ENCODE measurements at regions of chr3 and their contacts with region 1.

Region 1: GRCh38 chr3:116841003-116841735 is 131.6 kb downstream of the TUSC7 start:
- DNase-seq: no peak
- H3K4me3 ChIP-seq: no peak overlapping the region
- H3K27ac ChIP-seq: no peak overlapping the region; a peak in 1 of 4 replicates
- H3K4me1 ChIP-seq: peaks cover 0 to 2% of the 10 kb centered on the region in 2 experiments; a peak in 1 of 4 replicates
- H3K27me3 ChIP-seq: no peaks in the 10 kb centered on the region
- CTCF ChIP-seq: no peak
- EP300 ChIP-seq: no peak
- RAD21 ChIP-seq: no peak

Region 2: GRCh38 chr3:116863822-116864589 is 22.8 kb after region 1 on chr3:
- CTCF ChIA-PET with region 1: interaction called, 10 read pairs
- POLR2A ChIA-PET with region 1: no interaction called
- DNase-seq: peak; percentile 21
- H3K4me3 ChIP-seq: peak overlapping the region; percentile 60 to 70
- H3K27ac ChIP-seq: peak overlapping the region in 1 of 2 experiments; percentile 86; a peak in 2 of 4 replicates
- H3K4me1 ChIP-seq: peaks cover 0 to 16% of the 10 kb centered on the region in 2 experiments; a peak in 2 of 4 replicates
- H3K27me3 ChIP-seq: no peaks in the 10 kb centered on the region
- CTCF ChIP-seq: peak; percentile 71
- EP300 ChIP-seq: no peak
- RAD21 ChIP-seq: peak; percentile 94